ENCODE measurements at regions of chr3 and their contacts with region 1.

Region 1: GRCh38 chr3:57221883-57222282 is 5.6 kb upstream of the APPL1 start:
- DNase-seq: no peak
- H3K4me3 Mint-ChIP-seq: no peak overlapping the region
- H3K27ac Mint-ChIP-seq: no peak overlapping the region
- H3K4me1 Mint-ChIP-seq: peaks cover 6% of the 10 kb centered on the region
- H3K27me3 Mint-ChIP-seq: no peaks in the 10 kb centered on the region
- CTCF ChIP-seq: no peak

Region 2: GRCh38 chr3:56980798-56981390 is 241.0 kb before region 1 on chr3:
- CTCF ChIA-PET with region 1: no interaction called
- intact Hi-C with region 1: loop called (anchors 5 kb)
- DNase-seq: peak; percentile 64
- H3K4me3 Mint-ChIP-seq: no peak overlapping the region
- H3K27ac Mint-ChIP-seq: no peak overlapping the region
- H3K4me1 Mint-ChIP-seq: no peaks in the 10 kb centered on the region
- H3K27me3 Mint-ChIP-seq: no peaks in the 10 kb centered on the region
- CTCF ChIP-seq: no peak

Region 3: DNA sequence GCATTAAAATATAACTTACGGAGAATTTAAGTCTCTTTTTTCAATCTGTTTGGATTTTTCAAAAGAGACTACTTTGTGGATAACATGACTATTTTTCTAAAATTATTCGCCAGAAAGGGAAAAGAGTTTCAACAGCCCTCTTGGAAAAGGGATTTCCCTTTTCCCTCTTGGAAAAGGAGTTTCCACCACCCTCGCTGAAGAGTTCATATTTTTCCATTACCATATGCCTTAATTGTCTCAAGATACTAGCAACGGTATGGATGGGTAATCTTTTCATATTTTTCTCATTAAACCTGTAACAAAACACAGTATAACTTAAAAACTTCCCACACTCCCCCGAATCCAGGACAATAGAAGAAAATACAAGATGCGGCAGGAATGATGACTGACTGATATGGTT is 227.5 kb before region 1 on chr3:
- CTCF ChIA-PET with region 1: no interaction called
- intact Hi-C with region 1: loop called (anchors 2 kb)
- DNase-seq: no peak
- H3K4me3 Mint-ChIP-seq: no peak overlapping the region
- H3K27ac Mint-ChIP-seq: no peak overlapping the region
- H3K4me1 Mint-ChIP-seq: peaks cover 54% of the 10 kb centered on the region
- H3K27me3 Mint-ChIP-seq: no peaks in the 10 kb centered on the region
- CTCF ChIP-seq: no peak

Region 4: GRCh38 chr3:57100046-57100695 is 121.7 kb before region 1 on chr3:
- CTCF ChIA-PET with region 1: no interaction called
- intact Hi-C with region 1: loop called (anchors 1 kb)
- DNase-seq: peak; percentile 79
- H3K4me3 Mint-ChIP-seq: no peak overlapping the region
- H3K27ac Mint-ChIP-seq: no peak overlapping the region
- H3K4me1 Mint-ChIP-seq: peaks cover 17% of the 10 kb centered on the region
- H3K27me3 Mint-ChIP-seq: no peaks in the 10 kb centered on the region
- CTCF ChIP-seq: peak; percentile 82

Region 5: DNA sequence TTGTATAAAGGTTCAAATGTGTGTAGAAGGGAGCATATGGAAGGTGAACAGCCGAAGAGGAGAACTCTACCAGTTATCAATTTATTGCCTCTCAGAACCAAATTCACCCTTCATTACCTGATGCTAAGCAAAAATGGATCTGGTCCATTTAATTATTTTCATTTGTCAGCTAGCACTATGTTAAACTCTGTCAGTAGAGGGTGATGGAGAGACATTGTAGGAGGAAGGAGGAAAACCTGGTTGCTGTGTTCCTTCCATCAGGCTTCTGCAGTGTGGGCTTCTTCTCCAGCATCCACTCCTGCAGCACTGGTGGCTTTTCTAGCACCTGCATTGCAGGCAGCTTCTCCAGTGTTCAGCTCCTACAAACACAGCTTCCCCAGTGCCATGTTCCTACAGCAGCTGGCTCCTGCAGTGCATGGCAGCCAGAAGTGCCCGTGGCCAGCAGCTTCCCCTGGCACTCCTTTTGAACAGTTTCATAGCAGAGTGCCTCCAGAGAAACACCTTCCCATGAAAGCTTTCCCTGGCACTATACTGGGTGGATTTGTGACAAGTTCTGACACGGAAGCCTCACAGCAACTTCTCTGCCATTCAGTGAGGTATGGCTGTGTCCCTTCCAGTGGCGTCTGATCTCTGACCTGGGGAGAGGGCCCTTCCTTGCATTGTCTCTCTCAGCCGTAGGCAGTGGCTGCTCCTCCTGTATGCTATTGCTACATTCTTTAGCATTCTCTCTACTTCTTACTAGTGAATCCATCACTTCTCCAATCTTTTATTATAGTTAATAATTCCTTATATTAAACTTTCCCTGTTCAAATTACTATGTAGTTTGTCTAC is 42.1 kb before region 1 on chr3:
- CTCF ChIA-PET with region 1: interaction called, 3 read pairs
- intact Hi-C with region 1: loop called (anchors 5 kb)
- DNase-seq: no peak
- H3K4me3 Mint-ChIP-seq: no peak overlapping the region
- H3K27ac Mint-ChIP-seq: no peak overlapping the region
- H3K4me1 Mint-ChIP-seq: no peaks in the 10 kb centered on the region
- H3K27me3 Mint-ChIP-seq: no peaks in the 10 kb centered on the region
- CTCF ChIP-seq: no peak

Region 6: DNA sequence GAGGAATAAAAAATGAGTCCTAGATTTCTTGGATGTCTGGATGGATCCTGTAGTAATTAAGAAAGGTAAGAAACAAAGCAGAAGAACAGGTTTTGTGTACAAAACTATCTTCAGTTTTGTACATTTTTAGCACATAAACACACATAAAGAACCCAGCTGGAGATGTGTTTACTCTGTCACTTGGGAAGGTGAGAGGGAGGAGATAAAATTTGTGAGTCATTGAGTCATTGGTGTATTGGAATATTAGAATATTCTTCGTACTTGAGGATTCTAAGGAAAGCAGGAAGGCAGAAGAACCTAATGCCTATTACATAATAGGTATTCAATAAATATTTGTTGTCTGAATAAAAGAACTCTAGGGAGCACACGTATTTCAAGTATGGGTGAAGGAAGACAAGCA is 23.1 kb after region 1 on chr3:
- CTCF ChIA-PET with region 1: no interaction called
- intact Hi-C with region 1: no loop called
- DNase-seq: no peak
- H3K4me3 Mint-ChIP-seq: no peak overlapping the region
- H3K27ac Mint-ChIP-seq: no peak overlapping the region
- H3K4me1 Mint-ChIP-seq: no peaks in the 10 kb centered on the region
- H3K27me3 Mint-ChIP-seq: no peaks in the 10 kb centered on the region
- CTCF ChIP-seq: no peak